ENCODE measurements at regions of chr22 and their contacts with region 1.

Region 1: GRCh38 chr22:32265882-32266767 is 11.0 kb upstream of the SLC5A4 start:
- DNase-seq: peak; percentile 71
- ATAC-seq: peak; percentile 85
- H3K4me3 Mint-ChIP-seq: no peak overlapping the region
- H3K27ac Mint-ChIP-seq: peak overlapping the region; percentile 39
- H3K4me1 Mint-ChIP-seq: peaks cover 9% of the 10 kb centered on the region
- H3K27me3 Mint-ChIP-seq: no peaks in the 10 kb centered on the region; the same call in 1 of the 2 replicates
- CTCF ChIP-seq: peak; percentile 89

Region 2: GRCh38 chr22:32127904-32128303 is 138.2 kb before region 1 on chr22:
- CTCF ChIA-PET with region 1: interaction called, 11 read pairs
- POLR2A ChIA-PET with region 1: no interaction called
- DNase-seq: peak; percentile 74
- ATAC-seq: peak; percentile 91
- H3K4me3 Mint-ChIP-seq: no peak overlapping the region
- H3K27ac Mint-ChIP-seq: no peak overlapping the region
- H3K4me1 Mint-ChIP-seq: peaks cover 11% of the 10 kb centered on the region
- H3K27me3 Mint-ChIP-seq: no peaks in the 10 kb centered on the region
- CTCF ChIP-seq: peak; percentile 43; the same call in 1 of the 2 replicates

Region 3: DNA sequence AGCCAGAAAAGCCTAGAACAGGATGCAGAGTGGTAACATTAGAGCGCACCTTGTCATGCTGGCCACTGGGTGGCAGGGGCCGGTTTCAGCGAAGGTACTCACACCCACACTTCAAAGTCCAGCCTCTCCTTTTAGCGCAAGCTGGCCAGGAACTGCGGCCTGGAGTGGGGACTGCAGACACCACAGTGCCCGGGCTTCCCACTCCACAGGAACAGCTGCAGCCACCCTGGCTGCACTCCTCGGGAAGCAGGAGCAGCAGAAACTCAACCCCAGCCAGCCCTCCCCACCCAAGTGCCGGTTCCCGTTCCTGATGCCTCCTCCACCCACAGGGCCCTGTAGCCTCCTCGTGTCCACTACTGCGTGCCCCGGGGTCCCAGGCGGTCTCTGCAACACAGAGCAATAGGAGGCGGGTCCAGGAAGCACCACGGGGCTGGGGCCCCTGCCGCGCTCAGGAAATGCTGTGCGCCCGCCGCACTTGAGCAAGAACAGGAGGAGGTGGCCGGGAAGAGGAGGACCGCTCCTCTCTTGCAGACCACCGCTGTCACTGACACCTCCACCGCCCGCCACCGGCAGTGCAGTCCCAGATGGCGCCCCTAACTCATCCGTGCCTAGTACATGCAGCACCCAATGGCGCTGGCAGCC is 63.5 kb before region 1 on chr22:
- CTCF ChIA-PET with region 1: interaction called, 23 read pairs
- POLR2A ChIA-PET with region 1: no interaction called
- DNase-seq: peak; percentile 63
- ATAC-seq: peak; percentile 27
- H3K4me3 Mint-ChIP-seq: peak overlapping the region; percentile 82
- H3K27ac Mint-ChIP-seq: no peak overlapping the region
- H3K4me1 Mint-ChIP-seq: peaks cover 55% of the 10 kb centered on the region
- H3K27me3 Mint-ChIP-seq: peaks cover 60% of the 10 kb centered on the region
- CTCF ChIP-seq: peak; percentile 37

Region 4: DNA sequence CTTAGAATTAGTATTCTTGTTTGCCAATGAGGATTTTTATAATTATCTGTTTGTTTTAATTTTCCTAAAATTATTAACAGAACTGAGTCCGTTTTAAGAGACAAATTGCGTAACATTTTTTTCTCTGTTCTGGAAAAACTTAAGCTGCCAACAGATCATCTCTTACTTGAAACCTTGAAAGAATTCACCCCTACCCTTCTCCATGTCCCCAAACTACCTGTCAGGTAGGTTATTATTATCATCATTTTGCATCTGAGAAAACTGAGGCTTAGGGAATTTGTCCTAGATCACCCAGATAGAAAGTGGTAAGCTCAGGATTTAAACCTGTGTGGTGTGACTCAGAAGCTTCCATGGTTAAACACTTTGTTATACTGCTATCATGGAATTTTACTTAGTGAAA is 25.6 kb before region 1 on chr22:
- CTCF ChIA-PET with region 1: interaction called, 14 read pairs
- POLR2A ChIA-PET with region 1: no interaction called
- DNase-seq: no peak
- ATAC-seq: no peak
- H3K4me3 Mint-ChIP-seq: no peak overlapping the region
- H3K27ac Mint-ChIP-seq: no peak overlapping the region
- H3K4me1 Mint-ChIP-seq: peaks cover 9% of the 10 kb centered on the region
- H3K27me3 Mint-ChIP-seq: no peaks in the 10 kb centered on the region
- CTCF ChIP-seq: no peak

Region 5: GRCh38 chr22:32354360-32355351 is 88.5 kb after region 1 on chr22:
- CTCF ChIA-PET with region 1: interaction called, 13 read pairs
- POLR2A ChIA-PET with region 1: no interaction called
- DNase-seq: no peak
- ATAC-seq: peak; percentile 20; the same call in 1 of the 2 replicates
- H3K4me3 Mint-ChIP-seq: no peak overlapping the region
- H3K27ac Mint-ChIP-seq: no peak overlapping the region; the same call in 1 of the 2 replicates
- H3K4me1 Mint-ChIP-seq: peaks cover 29% of the 10 kb centered on the region
- H3K27me3 Mint-ChIP-seq: no peaks in the 10 kb centered on the region
- CTCF ChIP-seq: no peak

Region 6: GRCh38 chr22:32378707-32379272 is 112.7 kb after region 1 on chr22:
- CTCF ChIA-PET with region 1: interaction called, 13 read pairs
- POLR2A ChIA-PET with region 1: no interaction called
- DNase-seq: peak; percentile 82
- ATAC-seq: peak; percentile 96
- H3K4me3 Mint-ChIP-seq: no peak overlapping the region
- H3K27ac Mint-ChIP-seq: no peak overlapping the region
- H3K4me1 Mint-ChIP-seq: peaks cover 5% of the 10 kb centered on the region
- H3K27me3 Mint-ChIP-seq: no peaks in the 10 kb centered on the region
- CTCF ChIP-seq: peak; percentile 68

Region 7: GRCh38 chr22:32411829-32412592 is 145.9 kb after region 1 on chr22 and contains the start of gene RTCB:
- CTCF ChIA-PET with region 1: no interaction called
- POLR2A ChIA-PET with region 1: no interaction called
- DNase-seq: peak; percentile 87
- ATAC-seq: peak; percentile 71
- H3K4me3 Mint-ChIP-seq: peak within 1 kb of the TSS; percentile 96
- H3K27ac Mint-ChIP-seq: peak within 1 kb of the TSS; percentile 94
- H3K4me1 Mint-ChIP-seq: peaks cover 25% of the 10 kb centered on the region
- H3K27me3 Mint-ChIP-seq: peaks cover 12% of the 10 kb centered on the region
- CTCF ChIP-seq: no peak
- total RNA-seq, gene RTCB: 99.9 to 106 TPM (median 100 TPM) in 3 replicates

Measured in WTC11 (cell line).